WTC11 (cell line): ENCODE measurements at regions of chr9 and their contacts with region 1.

Region 1: GRCh38 chr9:126781186-126782052 is 23.4 kb upstream of the ZBTB43 start:
- DNase-seq: peak; percentile 97
- ATAC-seq: peak; percentile 79
- H3K4me3 Mint-ChIP-seq: peak overlapping the region; percentile 27
- H3K27ac Mint-ChIP-seq: no peak overlapping the region
- H3K4me1 Mint-ChIP-seq: 0 out of 2 replicates have a peak, but pooled peaks cover 4% of the 10 kb centered on the region
- H3K27me3 Mint-ChIP-seq: peaks cover 9% of the 10 kb centered on the region; the same call in 1 of the 2 replicates
- CTCF ChIP-seq: peak; percentile 98

Region 2: DNA sequence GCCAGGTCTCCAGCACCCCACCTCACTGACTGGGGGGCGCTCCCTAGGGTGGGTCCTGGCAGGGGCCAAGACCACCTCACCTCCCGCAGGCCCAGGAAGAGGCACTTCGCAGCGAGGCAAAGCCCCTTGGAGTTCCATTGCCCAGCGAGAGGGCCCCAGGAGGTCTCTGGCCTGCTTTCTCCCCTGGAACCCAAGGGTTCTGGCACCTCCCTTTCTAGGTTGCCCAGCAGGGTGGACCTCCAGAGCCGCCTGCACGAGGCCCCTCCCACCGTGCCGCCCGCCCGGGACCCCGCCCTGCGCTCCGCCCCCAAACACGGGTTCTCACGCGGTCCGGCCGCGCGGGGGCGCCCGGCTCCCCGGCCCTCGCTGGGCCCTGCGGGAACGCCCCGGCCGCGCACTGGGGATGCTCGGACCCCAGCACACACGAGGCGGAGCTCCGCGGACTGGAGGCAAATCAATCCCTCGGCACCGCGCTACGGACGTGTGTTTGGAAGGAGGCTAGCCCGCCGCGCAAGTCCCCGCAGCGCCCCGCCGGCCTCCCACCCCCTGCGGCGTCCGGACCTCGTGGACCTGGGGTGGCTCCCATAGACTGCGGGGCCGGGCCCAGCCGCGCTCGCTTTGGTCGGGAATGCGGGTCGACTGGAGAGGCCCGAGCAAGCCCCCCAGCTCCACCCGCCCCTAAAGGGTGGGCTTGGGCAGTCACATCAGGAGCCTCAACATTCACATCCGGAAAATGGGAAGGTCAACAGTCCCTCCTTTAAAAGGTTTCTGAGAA is 267.2 kb before region 1 on chr9:
- CTCF ChIA-PET with region 1: interaction called, 16 read pairs
- POLR2A ChIA-PET with region 1: no interaction called
- DNase-seq: peak; percentile 86
- ATAC-seq: peak; percentile 85
- H3K4me3 Mint-ChIP-seq: peak overlapping the region; percentile 48
- H3K27ac Mint-ChIP-seq: no peak overlapping the region
- H3K4me1 Mint-ChIP-seq: peaks cover 34% of the 10 kb centered on the region
- H3K27me3 Mint-ChIP-seq: peaks cover 20% of the 10 kb centered on the region
- CTCF ChIP-seq: peak; percentile 56

Region 3: DNA sequence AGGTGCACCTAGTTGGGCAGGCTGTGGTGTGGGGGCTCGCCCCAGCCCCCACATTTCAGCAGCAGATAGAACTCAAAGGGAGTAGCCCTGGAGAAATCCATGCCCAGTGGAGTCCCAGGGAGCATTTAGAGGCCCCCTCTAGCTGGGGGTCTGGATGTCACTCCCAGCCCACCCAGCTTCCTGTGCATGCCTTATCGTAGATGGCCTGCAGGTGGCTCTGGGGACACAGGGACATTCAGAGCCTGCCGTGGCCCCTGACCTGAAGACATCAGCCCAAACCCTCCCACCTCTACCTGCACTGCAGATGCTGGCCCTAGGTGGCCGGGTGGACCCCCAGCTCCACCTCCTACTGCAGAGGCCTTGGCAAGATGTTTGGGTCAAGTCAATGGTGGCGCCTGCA is 216.7 kb before region 1 on chr9:
- CTCF ChIA-PET with region 1: interaction called, 24 read pairs
- POLR2A ChIA-PET with region 1: no interaction called
- DNase-seq: peak; percentile 61
- ATAC-seq: peak; percentile 88
- H3K4me3 Mint-ChIP-seq: no peak overlapping the region
- H3K27ac Mint-ChIP-seq: no peak overlapping the region
- H3K4me1 Mint-ChIP-seq: no peaks in the 10 kb centered on the region
- H3K27me3 Mint-ChIP-seq: no peaks in the 10 kb centered on the region; the same call in 1 of the 2 replicates
- CTCF ChIP-seq: peak; percentile 37; the same call in 1 of the 2 replicates

Region 4: GRCh38 chr9:126611592-126612325 is 169.7 kb before region 1 on chr9:
- CTCF ChIA-PET with region 1: interaction called, 10 read pairs
- POLR2A ChIA-PET with region 1: no interaction called
- DNase-seq: peak; percentile 94
- ATAC-seq: peak; percentile 64
- H3K4me3 Mint-ChIP-seq: peak overlapping the region; percentile 58
- H3K27ac Mint-ChIP-seq: no peak overlapping the region
- H3K4me1 Mint-ChIP-seq: peaks cover 32% of the 10 kb centered on the region
- H3K27me3 Mint-ChIP-seq: peaks cover 94% of the 10 kb centered on the region
- CTCF ChIP-seq: peak; percentile 81

Region 5: DNA sequence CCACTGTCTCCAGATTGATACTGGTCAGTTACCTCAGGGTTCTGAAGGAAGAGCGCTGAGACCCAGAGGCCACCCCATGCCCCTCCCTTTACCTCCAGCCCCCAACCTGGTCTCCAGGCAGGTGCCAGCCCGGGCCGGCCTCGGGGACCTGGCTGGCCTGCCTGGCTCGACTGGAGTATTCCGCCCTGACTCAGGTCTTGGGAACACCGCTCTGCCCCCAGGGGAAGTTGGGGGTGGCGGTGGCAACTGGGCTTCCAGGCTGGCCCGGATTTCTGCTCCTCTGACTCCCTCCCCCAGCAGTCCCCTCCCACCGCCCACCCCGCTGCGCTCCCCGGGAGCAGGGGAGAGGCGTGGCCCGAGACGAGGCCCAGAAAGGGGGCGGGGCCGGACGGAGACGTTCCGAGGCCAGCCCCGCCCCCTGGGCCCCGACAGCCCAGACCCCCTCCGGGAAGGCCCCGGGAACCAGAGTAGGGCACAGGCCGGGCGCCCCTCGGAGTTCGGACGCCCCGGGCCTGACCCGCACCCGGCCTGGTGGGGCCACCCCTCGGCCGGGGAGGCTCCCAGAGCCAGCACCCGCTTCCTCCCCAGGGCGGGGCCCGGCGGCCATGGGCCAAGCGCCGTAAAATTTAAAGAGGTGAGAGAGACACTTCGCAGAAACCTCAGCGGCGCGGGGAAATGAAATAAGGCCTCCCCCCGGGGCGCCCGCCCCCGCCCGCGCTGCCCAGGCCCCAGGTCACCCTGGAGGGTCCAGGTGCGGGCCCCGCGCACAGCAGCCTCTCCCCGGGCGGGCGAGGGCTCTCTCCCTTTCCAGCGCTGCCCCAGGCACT is 59.0 kb before region 1 on chr9:
- CTCF ChIA-PET with region 1: interaction called, 10 read pairs
- POLR2A ChIA-PET with region 1: no interaction called
- DNase-seq: peak; percentile 88
- ATAC-seq: peak; percentile 64
- H3K4me3 Mint-ChIP-seq: peak overlapping the region; percentile 76
- H3K27ac Mint-ChIP-seq: peak overlapping the region; percentile 60; the same call in 1 of the 2 replicates
- H3K4me1 Mint-ChIP-seq: peaks cover 37% of the 10 kb centered on the region
- H3K27me3 Mint-ChIP-seq: peaks cover 47% of the 10 kb centered on the region
- CTCF ChIP-seq: no peak

Region 6: GRCh38 chr9:126791406-126792151 is 10.2 kb after region 1 on chr9:
- CTCF ChIA-PET with region 1: interaction called, 15 read pairs
- POLR2A ChIA-PET with region 1: no interaction called
- DNase-seq: no peak
- ATAC-seq: no peak
- H3K4me3 Mint-ChIP-seq: no peak overlapping the region
- H3K27ac Mint-ChIP-seq: no peak overlapping the region
- H3K4me1 Mint-ChIP-seq: no peaks in the 10 kb centered on the region
- H3K27me3 Mint-ChIP-seq: peaks cover 44% of the 10 kb centered on the region
- CTCF ChIP-seq: no peak